Spleen (tissue), 13 donors: ENCODE measurements at regions of chr7 and their contacts with region 1.

Region 1: GRCh38 chr7:38369816-38370493 is 96.5 kb upstream of the TARP start:
- DNase-seq: peak; percentile 96
- H3K4me3 ChIP-seq: peak overlapping the region in 1 of 8 donors; percentile 40
- H3K27ac ChIP-seq: peak overlapping the region; percentile 16 to 80 (median 62)
- H3K4me1 ChIP-seq: peaks cover 23 to 96% (median 54%) of the 10 kb centered on the region in 6 donors
- H3K27me3 ChIP-seq: no peaks in the 10 kb centered on the region
- CTCF ChIP-seq: peak; percentile 63 to 93 (median 84)
- POLR2A ChIP-seq: no peak

Region 2: DNA sequence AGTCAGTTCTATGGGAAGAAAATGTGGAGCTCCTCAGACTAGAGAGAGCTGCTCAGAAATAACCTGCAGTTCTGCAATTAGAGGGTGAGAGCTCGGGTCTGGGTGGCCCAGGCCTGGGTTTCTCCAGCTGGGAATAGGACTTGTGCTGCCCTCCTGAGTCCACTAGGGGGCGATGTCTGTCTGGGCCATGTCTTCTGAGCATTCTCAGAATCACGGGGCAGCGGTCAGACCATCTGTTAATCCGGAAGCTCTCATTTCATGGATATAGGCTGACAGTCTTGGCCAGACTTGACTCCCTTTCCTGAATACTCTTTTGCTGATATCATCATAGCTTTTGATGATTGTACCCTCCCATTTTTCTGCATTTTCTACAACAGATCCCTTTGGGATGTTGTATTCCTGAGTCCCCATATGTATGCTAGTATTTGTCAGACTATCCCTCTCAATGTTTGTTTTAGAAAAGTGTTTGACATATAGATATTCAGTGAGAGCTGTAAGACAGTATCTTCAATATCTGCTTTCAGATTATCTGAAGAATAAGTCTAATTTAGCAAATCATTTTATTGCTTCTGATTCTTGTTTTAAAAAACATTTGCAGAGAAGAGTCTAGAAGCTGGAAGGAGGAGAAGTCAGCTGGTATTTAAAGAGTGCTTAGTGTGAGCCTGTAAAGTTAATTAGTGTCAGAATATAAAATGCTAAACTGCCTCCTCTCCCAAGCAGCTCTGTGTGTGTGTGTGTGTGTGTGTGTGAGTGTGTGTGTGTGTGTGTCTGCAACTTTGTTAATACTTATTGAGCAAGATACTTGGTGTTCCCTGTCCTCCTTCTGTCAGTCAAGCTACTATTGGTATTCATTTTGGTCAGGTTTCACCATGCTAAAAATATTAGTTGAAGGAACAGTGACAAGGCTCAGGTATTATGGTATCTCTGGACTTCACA is 154.0 kb before region 1 on chr7:
- intact Hi-C with region 1: loop called (anchors 10 kb)
- DNase-seq: peak; percentile 92
- H3K4me3 ChIP-seq: no peak overlapping the region
- H3K27ac ChIP-seq: peak overlapping the region; percentile 20 to 79 (median 71)
- H3K4me1 ChIP-seq: peaks cover 3 to 67% (median 22%) of the 10 kb centered on the region in 6 donors
- H3K27me3 ChIP-seq: no peaks in the 10 kb centered on the region
- CTCF ChIP-seq: peak; percentile 92 to 98 (median 94)
- POLR2A ChIP-seq: no peak

Region 3: GRCh38 chr7:38478404-38478803 is 108.4 kb after region 1 on chr7:
- intact Hi-C with region 1: no loop called
- DNase-seq: no peak
- H3K4me3 ChIP-seq: no peak overlapping the region
- H3K27ac ChIP-seq: no peak overlapping the region
- H3K4me1 ChIP-seq: no peaks in the 10 kb centered on the region
- H3K27me3 ChIP-seq: peaks cover 0 to 5% (median 0%) of the 10 kb centered on the region in 7 donors
- CTCF ChIP-seq: no peak
- POLR2A ChIP-seq: no peak